ENCODE measurements at regions of chr14 and their contacts with region 1.

Region 1: DNA sequence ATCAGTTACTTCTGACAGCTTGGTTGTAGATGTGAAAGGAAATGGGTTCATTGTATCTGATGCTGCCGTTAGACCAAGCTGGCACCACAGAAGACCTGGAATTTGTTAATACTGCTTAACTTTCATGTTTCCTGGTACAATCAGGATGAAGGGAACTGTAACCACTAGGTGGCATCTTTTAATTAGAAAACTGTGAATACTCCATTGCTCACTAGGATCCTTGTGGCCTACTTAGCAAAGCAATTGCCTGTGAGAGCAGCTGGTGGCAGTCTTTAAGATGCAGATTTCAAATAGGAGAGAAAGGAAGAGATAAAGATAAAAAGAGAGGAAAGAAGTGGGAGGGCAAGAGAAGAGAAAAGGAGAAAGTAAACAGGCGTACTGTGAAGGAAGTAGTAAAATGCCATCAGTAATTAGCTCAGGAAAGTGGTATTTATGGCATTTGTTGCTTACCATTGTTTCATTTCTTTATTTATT is 114.5 kb downstream of the RAD51B start:
- H3K4me3 Mint-ChIP-seq: no peak overlapping the region
- H3K27ac Mint-ChIP-seq: no peak overlapping the region
- H3K4me1 Mint-ChIP-seq: peaks cover 6% of the 10 kb centered on the region
- H3K27me3 Mint-ChIP-seq: no peaks in the 10 kb centered on the region

Region 2: DNA sequence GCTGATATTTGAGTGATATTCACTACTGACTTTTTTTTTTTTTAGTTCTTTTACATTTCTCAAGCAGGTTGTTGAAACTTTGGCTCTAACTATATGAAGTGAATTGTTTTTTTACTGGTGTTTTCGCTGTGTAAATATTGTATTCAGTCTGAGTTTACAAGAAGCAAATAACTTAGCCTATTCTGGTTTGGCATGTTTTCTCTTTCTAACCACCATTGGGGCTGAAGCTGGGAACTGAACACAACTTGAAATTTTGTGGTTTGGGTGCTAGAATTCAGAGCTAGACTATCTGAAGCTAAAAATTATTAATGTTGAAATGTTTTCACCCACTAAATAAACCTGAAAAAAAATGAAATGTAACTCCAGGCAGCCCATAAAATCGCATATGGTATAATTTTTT is 77.2 kb before region 1 on chr14:
- intact Hi-C with region 1: no loop called
- H3K4me3 Mint-ChIP-seq: no peak overlapping the region
- H3K27ac Mint-ChIP-seq: no peak overlapping the region
- H3K4me1 Mint-ChIP-seq: peaks cover 34% of the 10 kb centered on the region
- H3K27me3 Mint-ChIP-seq: no peaks in the 10 kb centered on the region

Region 3: DNA sequence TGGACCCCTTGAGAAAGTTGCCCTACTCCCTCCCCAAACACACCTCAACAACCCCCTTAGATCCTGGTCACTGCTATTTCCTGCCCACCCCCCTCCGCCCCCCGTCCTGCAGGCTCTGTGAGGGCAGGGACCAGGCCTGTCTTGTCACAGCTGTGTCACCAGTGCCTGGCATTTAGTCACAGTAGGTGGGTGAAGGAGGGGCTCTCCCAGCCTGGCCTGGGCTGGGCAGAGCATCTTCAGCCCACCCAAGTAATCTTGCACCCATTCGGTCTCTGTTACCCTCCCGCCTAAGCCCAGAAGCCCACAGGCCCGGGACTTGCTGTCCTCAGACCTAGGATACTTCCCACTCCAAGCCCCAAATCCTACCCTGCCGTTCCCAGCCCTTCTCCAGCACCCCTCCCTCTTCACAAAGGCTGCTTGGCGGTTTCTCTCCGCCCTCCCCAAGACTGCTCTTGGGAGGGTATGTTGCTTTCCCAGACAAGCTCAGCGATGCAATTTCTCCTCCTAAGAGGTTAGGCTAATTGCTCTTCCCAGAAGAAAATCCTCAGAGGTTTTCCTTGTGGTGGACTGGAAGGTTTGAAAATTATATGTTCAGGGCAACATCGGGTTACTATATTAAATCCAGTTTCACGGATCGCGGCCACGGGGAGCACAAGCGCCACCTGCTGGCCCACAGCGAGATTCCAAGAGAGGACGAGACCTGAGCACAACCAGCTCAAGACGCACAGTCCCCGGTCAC is 909.6 kb after region 1 on chr14:
- intact Hi-C with region 1: loop called (anchors 2 kb)
- H3K4me3 Mint-ChIP-seq: peak overlapping the region; percentile 37
- H3K27ac Mint-ChIP-seq: peak overlapping the region; percentile 58
- H3K4me1 Mint-ChIP-seq: peaks cover 10% of the 10 kb centered on the region
- H3K27me3 Mint-ChIP-seq: peaks cover 12% of the 10 kb centered on the region